PC-9 (cell line): ENCODE measurements at regions of chr4 and their contacts with region 1.

Region 1: GRCh38 chr4:145266881-145267280 is 86.5 kb upstream of the OTUD4 start:
- DNase-seq: no peak
- H3K4me3 ChIP-seq: no peak overlapping the region
- H3K27ac ChIP-seq: no peak overlapping the region
- H3K4me1 ChIP-seq: no peaks in the 10 kb centered on the region
- H3K27me3 ChIP-seq: no peaks in the 10 kb centered on the region
- CTCF ChIP-seq: no peak

Region 2: GRCh38 chr4:145347684-145348083 is 80.8 kb after region 1 on chr4:
- CTCF ChIA-PET with region 1: no interaction called
- POLR2A ChIA-PET with region 1: interaction called, 14 read pairs
- intact Hi-C with region 1: no loop called
- DNase-seq: no peak
- H3K4me3 ChIP-seq: no peak overlapping the region
- H3K27ac ChIP-seq: no peak overlapping the region
- H3K4me1 ChIP-seq: no peaks in the 10 kb centered on the region
- H3K27me3 ChIP-seq: no peaks in the 10 kb centered on the region
- CTCF ChIP-seq: no peak

Region 3: GRCh38 chr4:145396581-145396980 is 129.7 kb after region 1 on chr4:
- CTCF ChIA-PET with region 1: interaction called, 15 read pairs
- POLR2A ChIA-PET with region 1: no interaction called
- intact Hi-C with region 1: no loop called
- DNase-seq: no peak
- H3K4me3 ChIP-seq: no peak overlapping the region
- H3K27ac ChIP-seq: no peak overlapping the region
- H3K4me1 ChIP-seq: no peaks in the 10 kb centered on the region
- H3K27me3 ChIP-seq: no peaks in the 10 kb centered on the region
- CTCF ChIP-seq: no peak